Natural killer cell (primary cell): ENCODE measurements at regions of chr1 and their contacts with region 1.

Region 1: GRCh38 chr1:24964811-24965570 is 34.9 kb upstream of the RUNX3 start:
- DNase-seq: peak; percentile 87 to 97
- ATAC-seq: peak; percentile 79 to 95 (median 91)
- H3K4me3 ChIP-seq: peak overlapping the region; percentile 39
- H3K4me3 Mint-ChIP-seq: peak overlapping the region; percentile 93
- H3K27ac ChIP-seq: peak overlapping the region; percentile 83
- H3K27ac Mint-ChIP-seq: peak overlapping the region; percentile 91 to 93
- H3K4me1 ChIP-seq: peaks cover 74% of the 10 kb centered on the region
- H3K4me1 Mint-ChIP-seq: peaks cover 23 to 34% of the 10 kb centered on the region in 2 donors
- H3K27me3 ChIP-seq: no peaks in the 10 kb centered on the region
- H3K27me3 Mint-ChIP-seq: peaks cover 10 to 22% of the 10 kb centered on the region in 2 donors
- CTCF ChIP-seq: no peak

Region 2: DNA sequence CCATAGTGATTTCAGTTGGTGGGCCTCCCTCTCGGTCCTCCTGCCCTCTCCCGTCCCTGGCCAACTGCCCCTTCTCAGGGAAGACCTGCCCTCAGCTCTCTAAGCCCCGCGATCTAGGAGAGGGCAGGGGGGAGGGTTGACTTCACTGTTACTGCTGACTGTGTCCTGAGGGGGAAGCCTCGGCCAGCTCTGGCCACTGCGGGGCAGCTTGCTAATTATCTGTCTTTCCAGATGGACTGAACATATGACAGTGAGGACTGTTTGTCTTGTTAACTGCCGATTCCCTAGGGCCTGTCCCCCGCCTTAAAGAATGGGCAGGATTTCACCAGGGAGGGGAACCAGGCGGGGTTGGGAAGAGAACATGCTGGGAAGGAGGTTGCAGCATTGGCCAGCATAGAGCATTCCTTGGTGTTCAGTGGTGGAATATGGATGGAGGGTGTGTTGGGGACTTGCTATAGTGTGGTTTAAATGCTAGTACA is 526.5 kb before region 1 on chr1:
- intact Hi-C with region 1: no loop called
- DNase-seq: no peak
- ATAC-seq: no peak
- H3K4me3 ChIP-seq: no peak overlapping the region
- H3K4me3 Mint-ChIP-seq: no peak overlapping the region
- H3K27ac ChIP-seq: no peak overlapping the region
- H3K27ac Mint-ChIP-seq: no peak overlapping the region
- H3K4me1 ChIP-seq: no peaks in the 10 kb centered on the region
- H3K4me1 Mint-ChIP-seq: peaks cover 0 to 9% of the 10 kb centered on the region in 2 donors
- H3K27me3 ChIP-seq: no peaks in the 10 kb centered on the region
- H3K27me3 Mint-ChIP-seq: no peaks in the 10 kb centered on the region
- CTCF ChIP-seq: no peak

Region 3: GRCh38 chr1:24910751-24911650 is 54.0 kb before region 1 on chr1:
- intact Hi-C with region 1: loop called (anchors 5 kb)
- DNase-seq: peak; percentile 94 to 95
- ATAC-seq: peak; percentile 64 to 84 (median 70)
- H3K4me3 ChIP-seq: peak overlapping the region; percentile 25
- H3K4me3 Mint-ChIP-seq: peak overlapping the region; percentile 83
- H3K27ac ChIP-seq: peak overlapping the region; percentile 100
- H3K27ac Mint-ChIP-seq: peak overlapping the region; percentile 99
- H3K4me1 ChIP-seq: peaks cover 99% of the 10 kb centered on the region
- H3K4me1 Mint-ChIP-seq: peaks cover 89 to 94% of the 10 kb centered on the region in 2 donors
- H3K27me3 ChIP-seq: no peaks in the 10 kb centered on the region
- H3K27me3 Mint-ChIP-seq: no peaks in the 10 kb centered on the region
- CTCF ChIP-seq: no peak

Region 4: DNA sequence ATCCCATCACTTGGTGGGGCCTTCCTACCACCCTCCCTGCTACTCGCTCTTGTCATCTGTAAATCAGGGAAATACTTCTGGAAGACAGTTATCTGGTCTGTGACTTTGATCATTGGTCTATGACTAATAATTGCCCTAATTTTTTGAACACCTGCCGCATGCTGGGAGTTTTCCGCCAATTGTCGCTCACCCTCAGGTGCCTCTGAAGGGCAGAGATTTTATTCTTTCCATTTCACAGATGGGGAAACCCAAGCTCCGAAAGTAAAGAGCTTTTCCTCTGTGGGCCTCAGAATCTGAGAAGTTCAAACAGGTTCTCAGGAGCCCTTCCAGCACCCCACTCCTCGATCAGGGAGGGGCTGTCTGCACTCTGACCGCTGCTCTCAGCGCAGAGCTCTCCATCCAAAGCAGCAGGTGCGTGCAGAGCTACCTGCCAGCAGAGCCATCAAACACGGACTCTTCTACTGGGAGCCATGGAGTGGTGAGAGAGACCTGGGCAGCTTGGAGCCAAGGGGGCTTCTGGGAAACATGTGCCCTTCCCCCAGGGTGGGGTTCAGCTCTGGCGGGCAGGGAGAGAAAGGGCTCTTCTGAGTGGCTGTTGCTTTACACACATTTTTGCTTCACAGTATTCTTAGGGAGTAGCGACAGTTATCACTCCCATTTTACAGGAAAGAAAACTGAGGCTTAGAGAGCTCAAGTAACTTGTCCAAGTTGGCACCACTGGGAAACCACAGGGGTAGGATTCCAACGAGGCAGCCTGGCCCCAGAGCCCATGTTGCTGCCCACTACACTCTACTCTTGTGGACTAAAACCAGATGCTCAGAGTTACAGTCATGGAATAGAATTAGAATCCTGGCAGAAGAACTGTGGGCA is 29.1 kb before region 1 on chr1:
- intact Hi-C with region 1: no loop called
- DNase-seq: peak in 1 of 2 donors; percentile 27
- ATAC-seq: no peak
- H3K4me3 ChIP-seq: no peak overlapping the region
- H3K4me3 Mint-ChIP-seq: no peak overlapping the region
- H3K27ac ChIP-seq: no peak overlapping the region
- H3K27ac Mint-ChIP-seq: no peak overlapping the region
- H3K4me1 ChIP-seq: peaks cover 42% of the 10 kb centered on the region
- H3K4me1 Mint-ChIP-seq: peaks cover 19 to 25% of the 10 kb centered on the region in 2 donors
- H3K27me3 ChIP-seq: no peaks in the 10 kb centered on the region
- H3K27me3 Mint-ChIP-seq: peaks cover 0 to 12% of the 10 kb centered on the region in 2 donors
- CTCF ChIP-seq: no peak

Region 5: GRCh38 chr1:24981631-24982005 is 16.6 kb after region 1 on chr1:
- intact Hi-C with region 1: loop called (anchors 2 kb)
- DNase-seq: peak; percentile 60 to 75
- ATAC-seq: peak; percentile 62 to 80 (median 69)
- H3K4me3 ChIP-seq: no peak overlapping the region
- H3K4me3 Mint-ChIP-seq: peak overlapping the region; percentile 57
- H3K27ac ChIP-seq: no peak overlapping the region
- H3K27ac Mint-ChIP-seq: peak overlapping the region; percentile 20 to 84
- H3K4me1 ChIP-seq: peaks cover 51% of the 10 kb centered on the region
- H3K4me1 Mint-ChIP-seq: peaks cover 43 to 72% of the 10 kb centered on the region in 2 donors
- H3K27me3 ChIP-seq: peaks cover 7% of the 10 kb centered on the region
- H3K27me3 Mint-ChIP-seq: peaks cover 65 to 68% of the 10 kb centered on the region in 2 donors
- CTCF ChIP-seq: no peak

Region 6: GRCh38 chr1:25022361-25023189 is 57.6 kb after region 1 on chr1:
- intact Hi-C with region 1: loop called (anchors 2 kb)
- DNase-seq: peak; percentile 90 to 99
- ATAC-seq: peak; percentile 79 to 94 (median 86)
- H3K4me3 ChIP-seq: peak overlapping the region; percentile 17
- H3K4me3 Mint-ChIP-seq: peak overlapping the region; percentile 85
- H3K27ac ChIP-seq: peak overlapping the region; percentile 100
- H3K27ac Mint-ChIP-seq: peak overlapping the region; percentile 93 to 99
- H3K4me1 ChIP-seq: peaks cover 100% of the 10 kb centered on the region
- H3K4me1 Mint-ChIP-seq: peaks cover 42 to 71% of the 10 kb centered on the region in 2 donors
- H3K27me3 ChIP-seq: no peaks in the 10 kb centered on the region
- H3K27me3 Mint-ChIP-seq: no peaks in the 10 kb centered on the region
- CTCF ChIP-seq: no peak

Region 7: GRCh38 chr1:25065795-25066238 is 100.8 kb after region 1 on chr1:
- intact Hi-C with region 1: loop called (anchors 1 kb)
- DNase-seq: peak; percentile 87 to 91
- ATAC-seq: peak; percentile 75 to 86 (median 85)
- H3K4me3 ChIP-seq: peak overlapping the region; percentile 20
- H3K4me3 Mint-ChIP-seq: peak overlapping the region; percentile 91
- H3K27ac ChIP-seq: peak overlapping the region; percentile 75
- H3K27ac Mint-ChIP-seq: peak overlapping the region; percentile 93 to 95
- H3K4me1 ChIP-seq: peaks cover 79% of the 10 kb centered on the region
- H3K4me1 Mint-ChIP-seq: peaks cover 52 to 71% of the 10 kb centered on the region in 2 donors
- H3K27me3 ChIP-seq: no peaks in the 10 kb centered on the region
- H3K27me3 Mint-ChIP-seq: peaks cover 23 to 24% of the 10 kb centered on the region in 2 donors
- CTCF ChIP-seq: no peak